Upper lobe of right lung (tissue), 1 donor: ENCODE measurements at regions of chr1 and their contacts with region 1.

Region 1: DNA sequence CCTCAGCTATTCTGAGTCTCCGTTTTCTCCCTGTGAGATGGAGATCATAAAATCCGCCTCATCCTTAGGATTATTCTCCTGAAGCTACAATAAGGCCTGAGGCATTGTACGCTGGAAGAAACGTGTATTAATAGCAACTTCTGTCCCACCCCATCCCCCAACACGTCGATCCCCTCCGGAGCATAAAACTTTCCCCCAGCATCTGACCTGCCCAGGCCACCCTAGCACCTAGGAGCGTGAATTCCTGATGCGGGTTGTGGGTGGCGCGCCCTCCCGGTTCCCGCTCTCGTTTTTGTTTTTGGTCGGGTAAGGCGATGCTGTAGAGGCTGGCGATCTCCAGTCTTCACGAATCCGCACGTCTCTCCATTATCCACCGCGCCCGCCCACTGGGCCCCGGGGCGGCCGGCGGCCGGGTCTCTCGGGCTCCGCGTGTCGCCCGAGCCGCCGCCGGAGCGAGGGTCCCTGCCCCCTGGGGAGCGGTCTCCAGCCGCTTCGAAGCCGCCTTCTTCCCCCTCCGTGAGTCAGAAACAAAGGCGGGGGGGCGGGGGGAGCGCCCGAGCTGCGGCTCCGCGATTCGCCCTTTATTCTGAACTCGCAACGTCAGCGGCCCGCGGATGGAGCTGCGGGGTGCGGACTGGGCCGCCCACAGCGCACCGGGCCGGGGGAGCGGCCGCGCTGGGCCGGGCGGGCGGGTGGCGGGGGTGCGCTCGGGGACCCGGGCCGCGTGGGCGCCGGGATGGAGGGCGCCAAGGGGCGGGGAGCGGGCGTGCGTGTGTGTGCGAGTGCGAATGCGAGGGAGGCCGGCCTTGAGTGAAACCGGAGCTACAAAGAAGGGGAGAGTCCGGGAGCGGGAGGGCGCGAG is at the start of gene PLEKHO1:
- DNase-seq: peak; percentile 90
- ATAC-seq: peak; percentile 87
- H3K4me3 ChIP-seq: peak within 1 kb of the TSS; percentile 70
- H3K27ac ChIP-seq: peak within 1 kb of the TSS; percentile 82
- H3K4me1 ChIP-seq: peaks cover 13% of the 10 kb centered on the region
- H3K27me3 ChIP-seq: no peaks in the 10 kb centered on the region
- CTCF ChIP-seq: no peak
- total RNA-seq, gene PLEKHO1: 44.5 TPM

Region 2: GRCh38 chr1:150072959-150073358 is 76.5 kb before region 1 on chr1:
- intact Hi-C with region 1: loop called (anchors 10 kb)
- DNase-seq: no peak
- ATAC-seq: peak; percentile 39
- H3K4me3 ChIP-seq: no peak overlapping the region
- H3K27ac ChIP-seq: no peak overlapping the region
- H3K4me1 ChIP-seq: peaks cover 7% of the 10 kb centered on the region
- H3K27me3 ChIP-seq: no peaks in the 10 kb centered on the region
- CTCF ChIP-seq: peak; percentile 51